AG04450 (cell line): ENCODE measurements at regions of chr1 and their contacts with region 1.

Region 1: GRCh38 chr1:185238447-185238846 is 78.6 kb downstream of the IVNS1ABP start:
- DNase-seq: no peak
- H3K4me3 ChIP-seq: no peak overlapping the region
- H3K27ac ChIP-seq: no peak overlapping the region
- H3K27me3 ChIP-seq: no peaks in the 10 kb centered on the region
- CTCF ChIP-seq: peak; percentile 56

Region 2: DNA sequence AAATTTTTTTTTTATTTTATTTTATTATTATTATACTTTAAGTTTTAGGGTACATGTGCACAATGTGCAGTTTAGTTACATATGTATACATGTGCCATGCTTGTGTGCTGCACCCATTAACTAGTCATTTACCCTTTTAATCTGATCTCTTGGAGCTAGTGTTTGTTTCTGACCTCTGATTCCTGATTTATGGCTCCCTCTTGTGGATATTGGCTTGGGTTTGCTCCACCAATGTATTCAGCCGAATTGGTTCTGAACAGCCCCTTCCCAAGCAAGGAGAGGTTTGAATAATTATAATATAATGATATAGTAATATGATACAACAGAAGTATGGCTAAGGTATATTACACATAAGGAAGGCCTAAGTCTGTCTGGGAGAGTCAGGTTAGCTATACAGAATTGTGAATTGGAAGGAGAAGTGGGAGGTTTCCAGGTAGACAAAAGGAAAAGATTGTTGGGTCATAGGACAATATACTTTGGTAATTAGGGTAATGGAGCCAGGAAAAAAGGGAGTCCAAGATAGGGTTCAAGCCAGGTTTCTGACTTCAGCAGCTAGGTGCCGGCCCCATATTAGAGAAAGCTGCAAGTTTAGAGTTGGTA is 442.7 kb after region 1 on chr1:
- CTCF ChIA-PET with region 1: interaction called, 27 read pairs
- POLR2A ChIA-PET with region 1: no interaction called
- DNase-seq: no peak
- H3K4me3 ChIP-seq: no peak overlapping the region
- H3K27ac ChIP-seq: no peak overlapping the region
- H3K27me3 ChIP-seq: no peaks in the 10 kb centered on the region
- CTCF ChIP-seq: peak; percentile 62